Naive thymus-derived CD4-positive, alpha-beta T cell (primary cell): ENCODE measurements at regions of chrX and their contacts with region 1.

Region 1: GRCh38 chrX:103175944-103176753 is 38.8 kb upstream of the BEX4 start:
- DNase-seq: peak; percentile 16 to 56 (median 43)
- ATAC-seq: peak; percentile 78
- H3K4me3 ChIP-seq: no peak overlapping the region
- H3K4me3 Mint-ChIP-seq: peak overlapping the region; percentile 7 to 71 (median 42)
- H3K27ac ChIP-seq: no peak overlapping the region
- H3K27ac Mint-ChIP-seq: no peak overlapping the region
- H3K4me1 ChIP-seq: no peaks in the 10 kb centered on the region
- H3K4me1 Mint-ChIP-seq: peaks cover 2 to 5% (median 4%) of the 10 kb centered on the region in 7 donors
- H3K27me3 ChIP-seq: no peaks in the 10 kb centered on the region
- H3K27me3 Mint-ChIP-seq: peaks cover 0 to 9% (median 6%) of the 10 kb centered on the region in 5 donors

Region 2: DNA sequence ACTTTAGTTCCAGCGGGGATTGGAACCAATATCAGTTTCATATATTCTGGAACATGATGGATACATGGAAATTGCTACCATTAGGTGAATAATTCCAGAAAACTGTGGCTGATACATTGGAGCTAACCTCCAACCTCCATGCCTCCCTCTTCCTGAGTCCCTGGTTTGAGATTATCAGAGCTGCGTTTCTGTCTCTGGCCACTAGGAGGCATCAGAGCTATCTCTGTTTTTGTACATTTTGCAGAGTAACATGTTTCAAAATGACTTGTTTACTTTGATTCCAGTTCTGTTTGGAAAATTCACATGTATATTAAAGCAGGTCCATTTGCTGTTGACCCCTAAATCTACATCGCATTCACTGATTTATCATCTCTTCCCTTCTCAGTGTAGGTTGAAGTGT is 241.5 kb before region 1 on chrX:
- CTCF ChIA-PET with region 1: no interaction called
- POLR2A ChIA-PET with region 1: no interaction called
- intact Hi-C with region 1: loop called in 1 of 2 experiments (anchors 5 kb)
- DNase-seq: peak in 6 of 9 donors; percentile 5 to 36 (median 25)
- ATAC-seq: no peak
- H3K4me3 ChIP-seq: no peak overlapping the region
- H3K4me3 Mint-ChIP-seq: no peak overlapping the region
- H3K27ac ChIP-seq: no peak overlapping the region
- H3K27ac Mint-ChIP-seq: no peak overlapping the region
- H3K4me1 ChIP-seq: no peaks in the 10 kb centered on the region
- H3K4me1 Mint-ChIP-seq: no peaks in the 10 kb centered on the region
- H3K27me3 ChIP-seq: no peaks in the 10 kb centered on the region
- H3K27me3 Mint-ChIP-seq: no peaks in the 10 kb centered on the region